Lower leg skin (tissue), 4 donors: ENCODE measurements at regions of chr13 and their contacts with region 1.

Region 1: GRCh38 chr13:76976490-76976889 is 15.4 kb upstream of the CLN5 start:
- DNase-seq: no peak
- H3K4me3 ChIP-seq: no peak overlapping the region
- CTCF ChIP-seq: no peak
- POLR2A ChIP-seq: no peak

Region 2: DNA sequence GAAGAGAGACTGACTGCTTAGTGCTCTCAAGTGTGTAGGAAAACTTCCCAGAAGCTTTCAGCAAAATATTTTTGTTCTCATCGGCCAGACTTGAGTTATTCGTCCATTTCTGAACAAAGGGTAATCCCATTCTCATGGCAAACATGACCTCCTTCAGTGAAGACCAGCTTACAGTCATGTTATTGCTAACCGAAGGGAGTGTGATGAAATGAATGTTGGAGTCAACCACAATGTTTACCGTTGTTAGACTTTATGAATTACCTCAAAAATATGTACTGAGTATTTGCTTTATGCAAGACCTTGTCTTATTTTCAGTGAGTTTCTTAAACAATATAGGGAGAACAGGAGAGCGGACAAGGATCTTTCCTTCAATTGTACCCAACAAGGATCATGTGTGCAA is 1111.8 kb before region 1 on chr13:
- intact Hi-C with region 1: loop called (anchors 10 kb)
- DNase-seq: no peak
- H3K4me3 ChIP-seq: no peak overlapping the region
- CTCF ChIP-seq: no peak
- POLR2A ChIP-seq: no peak